GM10248 (cell line): ENCODE measurements at regions of chr1 and their contacts with region 1.

Region 1: GRCh38 chr1:205121660-205122488 is at the start of gene RBBP5:
- DNase-seq: peak; percentile 89
- CTCF ChIP-seq: peak; percentile 83

Region 2: DNA sequence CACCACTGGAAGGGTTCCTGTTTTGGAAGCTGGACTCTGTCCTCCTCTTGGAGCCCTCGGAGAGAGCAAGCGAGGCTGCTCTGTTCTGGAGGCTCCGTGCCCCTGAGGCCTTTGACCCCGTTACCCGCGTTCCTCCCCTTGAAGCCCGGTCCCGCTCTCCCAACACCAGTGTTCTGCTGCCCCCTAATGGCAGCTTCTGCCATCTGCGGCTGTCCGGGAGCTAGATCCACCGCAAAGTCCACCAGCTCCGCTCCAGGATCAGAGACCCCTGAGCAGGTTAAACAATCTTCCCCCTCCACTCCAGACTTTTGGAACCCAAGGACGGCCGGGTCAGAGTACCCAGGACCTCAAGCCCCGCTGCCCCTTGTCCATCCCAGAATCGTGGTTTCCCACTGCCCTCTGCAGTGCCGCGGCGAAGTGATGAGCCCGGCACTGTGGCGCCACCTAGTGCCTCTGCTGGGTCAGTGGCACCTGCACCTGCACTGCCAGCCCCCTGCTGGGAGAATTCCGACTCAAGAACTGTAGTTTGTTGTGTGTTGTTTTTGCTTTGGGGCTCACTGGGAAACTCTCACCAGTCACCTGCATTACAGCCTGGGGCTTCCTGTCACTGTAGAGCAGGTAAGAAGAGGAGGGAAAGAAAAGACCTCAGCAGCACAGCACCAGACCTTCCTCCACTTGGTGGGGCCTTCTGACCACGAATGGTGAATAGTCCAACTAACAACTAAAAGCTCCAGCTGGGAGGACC is 314.8 kb before region 1 on chr1:
- CTCF ChIA-PET with region 1: no interaction called
- POLR2A ChIA-PET with region 1: no interaction called
- DNase-seq: peak; percentile 90
- CTCF ChIP-seq: peak; percentile 99

Region 3: GRCh38 chr1:205111354-205111753 is 10.5 kb before region 1 on chr1:
- CTCF ChIA-PET with region 1: interaction called, 24 read pairs
- POLR2A ChIA-PET with region 1: interaction called, 3 read pairs
- DNase-seq: no peak
- CTCF ChIP-seq: no peak

Region 4: DNA sequence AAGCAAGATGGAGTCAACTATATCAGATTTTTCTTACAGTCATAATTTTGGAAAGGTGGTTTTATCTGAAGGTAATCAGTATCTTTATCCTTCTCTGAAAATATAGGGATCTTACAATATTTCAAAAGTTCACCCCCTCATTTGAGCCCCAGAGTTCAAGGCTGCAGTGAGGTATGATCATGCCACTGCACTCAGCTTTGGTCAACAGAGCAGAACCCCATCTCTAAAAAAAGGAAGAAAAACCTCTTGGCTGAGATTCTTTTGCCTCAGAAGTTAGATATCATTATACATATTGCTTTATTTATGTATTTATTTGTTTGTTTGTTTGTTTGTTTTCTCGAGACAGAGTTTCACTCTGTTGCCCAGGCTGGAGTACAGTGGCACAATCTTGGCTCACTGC is 11.4 kb after region 1 on chr1:
- CTCF ChIA-PET with region 1: interaction called, 14 read pairs
- POLR2A ChIA-PET with region 1: interaction called, 4 read pairs
- DNase-seq: no peak
- CTCF ChIP-seq: no peak